AG04450 (cell line): ENCODE measurements at regions of chr3 and their contacts with region 1.

Region 1: DNA sequence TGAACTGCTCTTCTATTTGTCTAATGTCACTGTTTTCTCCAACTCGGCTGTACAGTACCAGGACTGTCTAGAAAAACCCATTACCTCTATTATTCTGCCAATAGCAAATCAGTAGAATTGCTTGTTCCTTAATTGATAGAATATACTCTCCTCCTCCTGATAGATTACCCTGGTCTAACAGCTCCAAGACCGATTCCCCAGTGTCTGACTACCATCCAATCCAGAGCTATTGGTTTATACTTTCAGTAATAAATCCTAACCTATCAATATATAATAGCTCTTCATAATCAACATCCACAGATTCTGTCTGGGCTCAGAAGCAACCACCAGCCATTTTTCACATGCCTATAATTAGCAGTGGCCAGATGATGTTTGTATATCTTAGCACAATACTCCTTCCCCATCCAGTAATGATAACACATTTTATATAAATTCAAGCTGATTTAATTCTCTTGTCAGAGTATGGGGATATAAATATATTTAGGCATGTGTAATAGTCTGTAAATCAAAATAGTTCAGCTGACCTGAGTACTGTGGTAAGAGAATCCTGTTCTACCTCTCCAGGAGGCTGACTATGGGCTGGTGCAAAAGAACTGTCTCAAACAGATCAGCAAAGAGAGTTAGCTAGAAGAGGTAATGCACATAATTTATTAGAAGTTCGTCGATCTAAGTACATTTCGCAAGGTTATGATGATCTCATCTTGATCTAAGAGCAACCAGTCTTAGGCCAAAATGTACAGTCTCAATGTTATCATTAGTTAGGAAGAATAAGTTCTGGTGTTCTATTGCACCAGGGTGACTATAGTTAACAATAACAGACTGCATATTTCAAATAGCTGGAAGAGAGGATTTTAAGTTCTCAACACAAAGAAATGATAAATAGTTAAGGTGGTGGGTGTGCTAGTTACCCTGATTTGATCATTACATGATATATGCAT is 193.4 kb downstream of the SHOX2 start:
- DNase-seq: no peak
- H3K4me3 ChIP-seq: no peak overlapping the region
- H3K27ac ChIP-seq: no peak overlapping the region
- H3K27me3 ChIP-seq: no peaks in the 10 kb centered on the region
- CTCF ChIP-seq: no peak

Region 2: GRCh38 chr3:157938154-157938779 is 25.5 kb after region 1 on chr3:
- CTCF ChIA-PET with region 1: no interaction called
- POLR2A ChIA-PET with region 1: no interaction called
- DNase-seq: no peak
- H3K4me3 ChIP-seq: no peak overlapping the region
- H3K27ac ChIP-seq: no peak overlapping the region
- H3K27me3 ChIP-seq: no peaks in the 10 kb centered on the region
- CTCF ChIP-seq: no peak

Region 3: DNA sequence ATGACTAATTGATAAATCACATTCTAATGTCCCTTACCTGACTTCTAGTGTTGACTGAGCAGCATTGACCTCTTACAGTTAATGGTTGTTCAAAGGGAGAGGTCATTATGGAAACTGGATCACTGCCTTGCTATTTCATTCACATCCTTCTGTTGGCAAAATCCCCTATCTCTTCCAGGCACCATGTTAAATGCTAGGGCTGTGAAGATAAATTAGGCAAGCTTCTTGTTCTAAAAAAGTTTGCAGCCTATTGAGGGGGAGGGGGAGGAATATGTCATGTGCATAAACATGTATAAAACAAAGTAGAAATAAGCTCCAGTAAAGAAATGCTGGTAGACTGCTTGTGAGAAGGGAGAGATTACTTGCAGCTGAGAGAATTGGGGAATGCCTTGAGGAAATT is 573.4 kb after region 1 on chr3:
- CTCF ChIA-PET with region 1: interaction called, 12 read pairs
- POLR2A ChIA-PET with region 1: no interaction called
- DNase-seq: no peak
- H3K4me3 ChIP-seq: no peak overlapping the region
- H3K27ac ChIP-seq: no peak overlapping the region
- H3K27me3 ChIP-seq: no peaks in the 10 kb centered on the region
- CTCF ChIP-seq: no peak